MCF 10A (cell line): ENCODE measurements at regions of chr5 and their contacts with region 1.

Region 1: GRCh38 chr5:99019812-99020697 is 91.2 kb upstream of the CHD1 start:
- DNase-seq: peak; percentile 81
- H3K4me3 Mint-ChIP-seq: peak overlapping the region; percentile 5
- H3K27ac Mint-ChIP-seq: peak overlapping the region; percentile 29
- H3K4me1 Mint-ChIP-seq: peaks cover 12% of the 10 kb centered on the region
- H3K27me3 Mint-ChIP-seq: no peaks in the 10 kb centered on the region
- CTCF ChIP-seq: no peak

Region 2: DNA sequence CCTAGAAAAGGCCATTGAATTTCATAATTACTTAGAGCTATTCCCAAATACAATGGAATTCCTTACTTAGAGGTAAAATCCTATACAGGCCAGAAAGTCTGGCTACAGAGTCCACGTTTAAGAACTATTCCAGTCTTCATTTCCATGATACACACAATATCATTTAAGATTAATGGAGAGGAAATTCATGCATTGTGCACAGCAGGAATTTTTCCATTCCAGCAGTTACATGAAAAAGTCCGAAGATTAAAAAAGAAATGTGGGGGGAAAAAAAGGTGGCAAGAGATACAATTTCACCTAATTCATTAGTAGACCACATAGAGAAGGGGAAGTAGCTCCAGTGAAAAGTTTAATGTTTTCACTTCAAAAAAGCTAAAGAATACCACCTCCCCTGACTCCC is 154.4 kb before region 1 on chr5:
- CTCF ChIA-PET with region 1: no interaction called
- POLR2A ChIA-PET with region 1: no interaction called
- intact Hi-C with region 1: no loop called
- DNase-seq: no peak
- H3K4me3 Mint-ChIP-seq: no peak overlapping the region
- H3K27ac Mint-ChIP-seq: no peak overlapping the region
- H3K4me1 Mint-ChIP-seq: no peaks in the 10 kb centered on the region
- H3K27me3 Mint-ChIP-seq: no peaks in the 10 kb centered on the region
- CTCF ChIP-seq: no peak

Region 3: GRCh38 chr5:98993512-98993911 is 26.5 kb before region 1 on chr5:
- CTCF ChIA-PET with region 1: no interaction called
- POLR2A ChIA-PET with region 1: no interaction called
- intact Hi-C with region 1: no loop called
- DNase-seq: no peak
- H3K4me3 Mint-ChIP-seq: no peak overlapping the region
- H3K27ac Mint-ChIP-seq: no peak overlapping the region
- H3K4me1 Mint-ChIP-seq: no peaks in the 10 kb centered on the region
- H3K27me3 Mint-ChIP-seq: no peaks in the 10 kb centered on the region
- CTCF ChIP-seq: no peak

Region 4: DNA sequence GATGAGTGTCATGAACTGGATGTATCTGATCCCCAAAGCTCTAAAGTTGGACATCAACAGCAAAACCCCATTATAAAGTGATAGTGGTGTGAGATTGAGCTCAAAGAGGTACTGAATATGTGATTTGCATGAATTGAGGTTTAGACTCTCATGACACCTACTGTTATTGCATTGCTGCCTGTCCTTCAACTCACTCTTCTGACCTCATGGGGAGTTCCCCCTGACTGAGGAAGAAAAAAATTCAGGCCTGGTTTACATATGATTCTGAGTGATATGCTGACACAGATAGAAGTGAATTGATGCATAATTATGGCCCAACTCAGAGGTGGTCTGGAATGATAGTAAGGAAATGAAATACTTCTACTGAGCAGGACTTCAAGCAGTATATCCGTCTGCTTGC is 15.1 kb before region 1 on chr5:
- CTCF ChIA-PET with region 1: interaction called, 10 read pairs
- POLR2A ChIA-PET with region 1: interaction called, 3 read pairs
- intact Hi-C with region 1: no loop called
- DNase-seq: no peak
- H3K4me3 Mint-ChIP-seq: no peak overlapping the region
- H3K27ac Mint-ChIP-seq: no peak overlapping the region
- H3K4me1 Mint-ChIP-seq: peaks cover 11% of the 10 kb centered on the region
- H3K27me3 Mint-ChIP-seq: no peaks in the 10 kb centered on the region
- CTCF ChIP-seq: no peak

Region 5: DNA sequence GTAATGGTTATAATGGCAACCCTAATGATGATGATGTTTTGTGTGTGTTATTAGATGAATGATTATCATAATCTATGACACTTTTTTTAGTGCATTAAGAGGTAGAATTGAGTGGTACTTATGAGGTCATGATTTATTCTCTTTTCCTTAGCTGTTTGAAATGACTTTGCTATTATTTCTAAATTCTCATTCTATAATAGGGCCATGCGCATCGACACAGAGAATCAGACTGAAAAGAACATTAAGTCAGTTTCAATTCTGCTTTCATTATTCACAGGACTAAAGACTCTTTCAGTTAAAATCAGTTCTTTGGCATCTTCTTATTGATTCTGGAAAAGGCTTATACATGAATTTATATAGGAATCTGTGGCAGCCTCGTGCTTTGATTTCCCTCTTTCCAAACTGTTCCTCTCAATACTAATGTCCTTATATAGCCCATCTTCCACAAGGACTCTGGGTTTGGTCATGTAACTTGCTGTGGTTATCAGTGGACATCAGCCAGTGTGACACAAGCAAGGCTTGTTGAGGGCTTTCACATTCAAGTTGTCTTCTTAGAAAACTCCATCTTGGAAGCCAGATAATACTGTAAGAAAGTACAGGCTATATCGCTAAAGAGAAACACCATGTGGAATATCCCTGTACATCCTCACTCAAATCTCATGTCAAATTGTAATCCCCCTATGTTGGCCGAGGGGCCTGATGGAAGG is 49.0 kb after region 1 on chr5:
- CTCF ChIA-PET with region 1: no interaction called
- POLR2A ChIA-PET with region 1: no interaction called
- intact Hi-C with region 1: no loop called
- DNase-seq: no peak
- H3K4me3 Mint-ChIP-seq: no peak overlapping the region
- H3K27ac Mint-ChIP-seq: no peak overlapping the region
- H3K4me1 Mint-ChIP-seq: peaks cover 7% of the 10 kb centered on the region
- H3K27me3 Mint-ChIP-seq: no peaks in the 10 kb centered on the region
- CTCF ChIP-seq: no peak